CD4-positive, alpha-beta memory T cell (primary cell): ENCODE measurements at regions of chr4 and their contacts with region 1.

Region 1: GRCh38 chr4:102598086-102598761 is 97.1 kb downstream of the NFKB1 start:
- DNase-seq: peak; percentile 62 to 83 (median 78)
- H3K4me3 ChIP-seq: no peak overlapping the region
- H3K4me3 Mint-ChIP-seq: peak overlapping the region; percentile 46 to 82 (median 68)
- H3K27ac ChIP-seq: peak overlapping the region; percentile 57
- H3K27ac Mint-ChIP-seq: peak overlapping the region; percentile 87 to 99 (median 92)
- H3K4me1 ChIP-seq: peaks cover 73% of the 10 kb centered on the region
- H3K4me1 Mint-ChIP-seq: peaks cover 54 to 88% (median 69%) of the 10 kb centered on the region in 4 donors
- H3K27me3 ChIP-seq: no peaks in the 10 kb centered on the region
- H3K27me3 Mint-ChIP-seq: no peaks in the 10 kb centered on the region

Region 2: GRCh38 chr4:102586644-102587021 is 11.6 kb before region 1 on chr4:
- CTCF ChIA-PET with region 1: interaction called, 3 read pairs
- POLR2A ChIA-PET with region 1: interaction called, 13 read pairs
- intact Hi-C with region 1: loop called (anchors 2 kb)
- DNase-seq: peak; percentile 26 to 57 (median 39)
- H3K4me3 ChIP-seq: no peak overlapping the region
- H3K4me3 Mint-ChIP-seq: peak overlapping the region in 7 of 8 donors; percentile 53 to 81 (median 71)
- H3K27ac ChIP-seq: peak overlapping the region; percentile 25
- H3K27ac Mint-ChIP-seq: peak overlapping the region; percentile 72 to 96 (median 85)
- H3K4me1 ChIP-seq: peaks cover 73% of the 10 kb centered on the region
- H3K4me1 Mint-ChIP-seq: peaks cover 60 to 88% (median 72%) of the 10 kb centered on the region in 4 donors
- H3K27me3 ChIP-seq: no peaks in the 10 kb centered on the region
- H3K27me3 Mint-ChIP-seq: no peaks in the 10 kb centered on the region